GM10248 (cell line): ENCODE measurements at regions of chr10 and their contacts with region 1.

Region 1: DNA sequence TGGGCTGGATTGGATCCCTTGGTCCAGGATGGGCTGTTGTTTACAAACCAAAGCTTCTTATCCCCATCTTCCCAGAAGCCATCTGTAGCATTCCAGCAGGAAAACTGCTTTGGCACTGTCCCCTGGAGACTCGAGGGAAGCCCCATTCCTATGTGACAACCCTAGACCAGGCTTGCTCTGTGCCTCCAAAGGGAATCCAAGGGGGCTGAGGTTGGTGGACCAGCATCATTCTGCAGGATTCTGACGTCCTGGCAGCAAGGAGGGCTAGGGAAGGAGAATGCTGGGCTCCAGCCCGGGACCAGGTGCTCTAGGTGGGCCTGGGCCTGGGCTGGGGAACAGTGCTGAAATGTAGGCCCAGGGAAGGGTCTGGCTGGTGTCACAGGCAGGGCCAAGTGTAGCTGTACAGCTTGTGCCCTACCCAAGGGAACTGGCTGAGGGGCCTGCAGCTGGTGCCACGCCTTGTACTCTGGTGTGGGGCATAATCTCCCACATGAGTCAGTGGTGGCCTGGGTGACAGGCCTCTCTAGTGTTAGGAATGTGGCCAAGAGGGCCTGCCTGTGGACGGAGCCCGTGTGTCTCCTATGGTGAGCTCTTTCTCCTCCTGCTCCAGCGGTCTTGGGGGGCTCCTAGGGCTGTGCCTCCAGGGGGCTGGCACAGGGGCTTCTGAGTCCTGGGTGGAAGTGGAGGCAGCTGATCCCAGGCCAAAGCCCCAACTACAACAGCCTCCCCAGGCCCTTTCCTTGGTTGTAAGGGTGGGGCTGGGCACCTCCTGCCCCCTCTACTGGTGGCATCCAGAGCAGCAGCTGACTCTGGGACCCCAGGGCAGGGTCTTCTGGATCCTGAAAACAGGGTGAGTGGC is 25.2 kb downstream of the TRIM8 start:
- DNase-seq: no peak
- CTCF ChIP-seq: peak; percentile 32

Region 2: DNA sequence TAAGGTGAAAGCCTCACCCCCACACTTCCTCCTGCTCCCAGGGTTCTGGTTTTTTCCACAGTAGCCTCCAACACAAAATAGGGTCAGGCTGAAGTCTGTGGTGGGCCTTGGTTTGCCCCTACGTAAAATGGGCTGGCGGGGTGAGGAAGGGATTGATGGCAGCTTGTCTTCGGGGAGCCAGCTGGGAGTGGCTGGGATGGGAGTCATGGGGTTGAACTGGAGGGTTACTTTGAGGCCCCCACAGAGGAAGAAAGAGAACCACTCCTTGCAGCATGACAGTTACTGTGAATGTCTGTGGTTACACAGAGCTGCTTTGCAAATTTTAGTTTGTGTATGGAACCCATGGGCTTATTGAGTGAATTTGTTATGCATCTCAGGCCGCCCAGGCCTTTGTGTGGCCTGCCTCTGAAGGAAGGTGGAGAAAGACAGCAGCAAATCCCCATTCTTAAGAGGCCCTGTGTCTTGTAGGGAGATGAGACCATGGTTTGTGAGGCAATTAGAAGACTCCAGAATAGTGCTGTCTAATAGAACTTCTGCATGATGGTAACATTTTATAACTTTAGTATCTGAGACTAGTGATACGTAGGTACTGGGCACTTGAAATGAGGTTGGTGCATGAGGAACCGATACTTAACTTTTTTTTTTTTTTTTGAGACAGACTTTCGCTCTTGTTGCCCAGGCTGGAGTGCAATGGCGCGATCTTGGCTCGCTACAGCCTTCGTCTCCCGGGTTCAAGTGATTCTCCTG is 17.1 kb before region 1 on chr10:
- CTCF ChIA-PET with region 1: interaction called, 11 read pairs
- POLR2A ChIA-PET with region 1: interaction called, 3 read pairs
- DNase-seq: peak; percentile 73
- CTCF ChIP-seq: no peak